Ovary (tissue), 10 donors: ENCODE measurements at regions of chr1 and their contacts with region 1.

Region 1: DNA sequence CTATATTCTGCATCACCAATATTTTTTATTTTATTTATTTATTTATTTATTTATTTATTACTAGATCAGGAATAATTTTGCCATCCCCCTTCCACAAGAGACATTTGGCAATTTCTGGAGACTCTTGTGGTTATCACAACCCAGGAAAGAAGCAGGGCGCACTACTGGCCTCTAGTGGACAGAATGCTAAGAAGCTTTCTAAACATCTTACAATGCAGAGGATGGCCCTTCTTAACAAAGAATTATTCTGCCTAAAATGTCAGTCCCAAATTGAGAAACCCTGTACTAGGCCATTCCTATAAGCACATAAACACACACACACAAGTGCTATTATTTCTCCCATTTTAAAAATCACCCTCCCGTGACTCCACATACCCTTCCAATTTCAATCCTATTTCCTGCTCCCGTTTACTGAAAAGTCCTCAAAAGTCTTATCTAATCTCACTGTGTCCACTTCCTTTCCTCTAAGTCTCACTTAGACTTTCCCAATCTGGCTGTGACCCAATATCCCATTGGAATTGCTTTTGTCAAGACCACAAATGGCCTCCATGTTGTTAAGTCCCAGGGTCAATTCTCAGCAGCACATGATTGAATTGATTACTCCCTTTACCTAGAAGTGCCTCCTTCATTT is 43.7 kb upstream of the RNF11 start:
- DNase-seq: peak; percentile 65 to 83 (median 73)
- H3K4me3 ChIP-seq: no peak overlapping the region
- H3K27ac ChIP-seq: no peak overlapping the region
- H3K4me1 ChIP-seq: peaks cover 2% of the 10 kb centered on the region
- H3K27me3 ChIP-seq: no peaks in the 10 kb centered on the region
- CTCF ChIP-seq: peak; percentile 63 to 73 (median 72)
- EP300 ChIP-seq: no peak
- POLR2A ChIP-seq: no peak

Region 2: DNA sequence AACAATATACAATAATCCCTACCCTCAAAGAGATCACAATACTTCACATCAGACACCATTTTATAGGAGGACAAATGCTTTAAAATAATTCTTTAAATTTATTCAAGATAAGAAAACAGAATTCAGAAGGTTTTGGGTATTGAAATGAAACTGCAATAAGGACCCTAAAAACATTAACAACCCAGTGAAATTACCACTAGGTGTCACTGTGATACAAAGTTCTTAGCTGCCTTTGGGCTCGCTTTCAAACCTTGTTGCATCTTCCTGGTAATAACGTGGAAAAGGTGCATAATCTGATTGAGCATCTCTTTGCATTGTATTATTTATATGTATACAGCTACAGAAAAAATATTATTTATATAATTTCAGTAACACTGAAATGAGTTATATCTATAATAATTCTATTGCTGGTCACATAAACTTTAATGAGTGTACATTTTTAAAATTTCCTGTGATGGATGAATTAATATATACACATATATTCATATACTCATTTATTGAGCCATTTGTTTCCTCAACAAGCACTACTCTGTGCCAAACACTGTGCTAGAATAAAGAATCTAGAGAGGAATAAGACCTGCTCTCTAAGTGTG is 417.5 kb before region 1 on chr1:
- intact Hi-C with region 1: loop called in 1 of 4 experiments (anchors 10 kb)
- DNase-seq: no peak
- H3K4me3 ChIP-seq: no peak overlapping the region
- H3K27ac ChIP-seq: no peak overlapping the region
- H3K4me1 ChIP-seq: peaks cover 2% of the 10 kb centered on the region
- H3K27me3 ChIP-seq: no peaks in the 10 kb centered on the region
- CTCF ChIP-seq: peak; percentile 42 to 63 (median 45)
- EP300 ChIP-seq: no peak
- POLR2A ChIP-seq: no peak

Region 3: GRCh38 chr1:50901872-50902271 is 290.5 kb before region 1 on chr1:
- intact Hi-C with region 1: no loop called
- DNase-seq: no peak
- H3K4me3 ChIP-seq: no peak overlapping the region
- H3K27ac ChIP-seq: no peak overlapping the region
- H3K4me1 ChIP-seq: no peaks in the 10 kb centered on the region
- H3K27me3 ChIP-seq: no peaks in the 10 kb centered on the region
- CTCF ChIP-seq: no peak
- EP300 ChIP-seq: no peak
- POLR2A ChIP-seq: no peak

Region 4: GRCh38 chr1:50930193-50930592 is 262.1 kb before region 1 on chr1:
- intact Hi-C with region 1: loop called in 1 of 4 experiments (anchors 10 kb)
- DNase-seq: no peak
- H3K4me3 ChIP-seq: no peak overlapping the region
- H3K27ac ChIP-seq: no peak overlapping the region
- H3K4me1 ChIP-seq: no peaks in the 10 kb centered on the region
- H3K27me3 ChIP-seq: no peaks in the 10 kb centered on the region
- CTCF ChIP-seq: no peak
- EP300 ChIP-seq: no peak
- POLR2A ChIP-seq: no peak

Region 5: DNA sequence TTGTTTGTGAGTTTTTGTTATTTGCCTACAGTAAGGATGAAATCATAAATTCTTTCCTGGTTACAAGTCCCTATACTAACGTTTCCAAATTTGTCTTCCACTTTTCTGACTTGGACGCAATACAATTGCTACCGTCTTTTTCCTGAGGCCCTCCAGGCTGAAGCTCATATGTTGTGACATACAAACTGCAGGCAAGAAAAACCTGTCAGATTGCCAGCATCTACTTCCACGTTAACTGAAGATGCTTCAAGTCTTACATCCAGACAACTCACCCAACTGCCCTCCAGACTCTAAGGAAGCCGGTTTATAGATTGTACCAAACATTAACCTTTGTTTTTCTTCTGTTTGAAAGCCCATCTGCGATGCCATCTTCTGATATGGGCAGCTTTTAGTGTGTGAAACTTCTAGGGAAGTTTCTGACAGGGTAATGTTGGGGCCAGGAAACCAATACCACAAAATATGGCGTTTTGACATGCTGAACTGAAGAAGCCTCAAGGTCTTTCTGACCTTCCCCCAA is 22.3 kb after region 1 on chr1:
- intact Hi-C with region 1: loop called in 1 of 4 experiments (anchors 2 kb)
- DNase-seq: peak in 2 of 5 donors; percentile 44 to 52
- H3K4me3 ChIP-seq: no peak overlapping the region
- H3K27ac ChIP-seq: peak overlapping the region; percentile 79 to 86
- H3K4me1 ChIP-seq: peaks cover 19% of the 10 kb centered on the region
- H3K27me3 ChIP-seq: no peaks in the 10 kb centered on the region
- CTCF ChIP-seq: no peak
- EP300 ChIP-seq: no peak
- POLR2A ChIP-seq: no peak

Region 6: GRCh38 chr1:51247022-51247421 is 54.7 kb after region 1 on chr1:
- intact Hi-C with region 1: loop called in 1 of 4 experiments (anchors 10 kb)
- DNase-seq: no peak
- H3K4me3 ChIP-seq: no peak overlapping the region
- H3K27ac ChIP-seq: no peak overlapping the region
- H3K4me1 ChIP-seq: peaks cover 3% of the 10 kb centered on the region
- H3K27me3 ChIP-seq: no peaks in the 10 kb centered on the region
- CTCF ChIP-seq: no peak
- EP300 ChIP-seq: no peak
- POLR2A ChIP-seq: no peak

Region 7: DNA sequence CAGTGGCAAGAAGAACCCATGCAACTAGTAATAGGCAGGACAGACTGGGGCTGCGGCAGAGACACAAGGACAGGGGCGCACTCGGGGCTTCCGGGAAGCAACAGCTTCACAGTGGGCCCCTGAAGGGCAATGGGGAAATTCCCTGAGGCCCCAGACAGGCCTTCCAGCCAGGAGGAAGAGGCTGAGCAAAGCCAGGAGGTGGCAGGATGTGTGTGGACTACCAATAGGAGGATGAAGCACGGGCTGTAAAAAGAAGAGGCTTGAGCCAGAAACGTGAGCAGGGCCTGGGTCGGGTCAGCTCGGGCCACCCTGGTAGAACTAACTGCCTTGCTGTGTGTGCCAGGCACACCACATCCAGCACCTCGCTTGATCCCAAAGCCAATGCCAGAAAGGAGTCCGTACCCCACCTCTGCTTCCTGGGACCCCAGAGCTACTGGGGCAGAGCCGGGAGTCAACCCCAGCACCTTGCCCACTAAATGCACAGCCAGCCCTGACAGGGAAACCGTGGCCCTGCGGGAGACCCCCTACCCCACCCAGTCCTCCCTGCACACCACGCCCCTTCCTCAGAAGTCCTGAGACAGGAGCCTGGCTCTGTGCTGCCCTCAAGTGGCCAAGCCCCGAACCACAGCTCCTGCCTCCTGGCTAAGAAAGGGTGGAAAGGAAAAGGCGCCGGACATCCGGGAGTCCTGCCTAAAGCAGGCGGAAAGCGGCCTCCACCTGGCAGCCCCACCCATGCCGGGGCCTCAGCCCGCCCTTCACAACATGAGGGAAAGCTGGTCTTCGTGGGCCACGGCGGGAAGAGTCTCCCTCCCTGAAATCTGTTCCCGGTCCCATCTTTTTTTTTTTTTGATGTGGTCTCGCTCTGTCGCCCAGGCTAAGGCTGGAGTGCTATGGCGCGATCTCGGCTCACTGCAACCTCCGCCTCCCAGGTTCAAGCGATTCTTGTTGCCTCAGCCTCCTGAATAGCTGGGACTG is 104.3 kb after region 1 on chr1:
- intact Hi-C with region 1: loop called in 2 of 4 experiments (anchors 5 to 10 kb)
- DNase-seq: peak; percentile 78 to 93 (median 88)
- H3K4me3 ChIP-seq: peak overlapping the region; percentile 36
- H3K27ac ChIP-seq: no peak overlapping the region
- H3K4me1 ChIP-seq: peaks cover 3% of the 10 kb centered on the region
- H3K27me3 ChIP-seq: no peaks in the 10 kb centered on the region
- CTCF ChIP-seq: peak; percentile 89 to 91 (median 91)
- EP300 ChIP-seq: no peak
- POLR2A ChIP-seq: no peak